Transverse colon (tissue), 4 donors: ENCODE measurements at regions of chr12 and their contacts with region 1.

Region 1: DNA sequence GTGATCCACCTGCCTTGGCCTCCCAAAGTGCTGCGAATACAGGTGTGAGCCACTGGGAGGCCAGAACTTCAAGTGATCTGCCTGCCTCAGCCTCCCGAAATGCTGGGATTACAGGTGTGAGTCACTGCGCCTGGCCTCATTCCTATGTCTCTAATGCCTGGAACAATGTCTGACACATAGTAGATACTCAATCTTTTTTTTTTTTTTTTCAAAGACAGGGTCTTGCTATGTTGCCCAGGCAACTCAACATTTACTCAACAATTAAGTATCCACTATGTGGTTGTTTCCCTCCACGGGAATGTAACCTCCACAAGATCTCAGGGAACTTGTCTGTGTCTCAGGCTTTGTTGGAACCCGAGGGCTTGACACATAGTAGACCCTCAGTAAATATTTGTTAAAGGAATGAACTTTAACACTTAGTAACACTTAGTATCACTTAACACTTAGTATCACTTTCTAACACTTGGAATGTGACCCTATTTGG is 3.0 kb upstream of the TMEM120B start:
- DNase-seq: no peak
- H3K4me3 ChIP-seq: no peak overlapping the region
- H3K27ac ChIP-seq: no peak overlapping the region
- H3K4me1 ChIP-seq: peaks cover 9 to 20% (median 18%) of the 10 kb centered on the region in 4 donors
- H3K27me3 ChIP-seq: no peaks in the 10 kb centered on the region
- CTCF ChIP-seq: no peak
- EP300 ChIP-seq: no peak
- POLR2A ChIP-seq: no peak

Region 2: DNA sequence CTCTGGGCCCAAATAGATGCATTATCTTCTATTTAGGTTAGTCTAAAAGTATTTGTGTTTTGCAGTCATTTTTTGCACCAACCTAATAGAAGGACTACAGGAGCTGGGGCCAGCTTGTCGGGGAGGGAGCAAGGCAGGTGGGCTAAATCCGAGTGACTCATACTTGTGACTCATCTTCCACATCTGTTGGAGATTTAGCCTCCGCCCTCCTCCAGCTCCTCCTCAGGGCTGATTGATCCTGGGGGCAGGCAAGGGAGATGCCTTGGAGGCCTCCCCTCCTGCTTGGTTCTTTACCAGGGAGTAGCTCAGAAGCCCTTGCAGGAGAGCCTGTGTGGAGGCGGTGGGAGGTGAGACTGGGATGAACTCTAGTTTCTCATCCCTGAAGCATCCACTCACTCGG is 56.1 kb after region 1 on chr12:
- in situ Hi-C with region 1: loop called in 2 of 4 experiments (anchors 10 kb)
- intact Hi-C with region 1: no loop called
- DNase-seq: no peak
- H3K4me3 ChIP-seq: no peak overlapping the region
- H3K27ac ChIP-seq: no peak overlapping the region
- H3K4me1 ChIP-seq: peaks cover 0 to 19% (median 8%) of the 10 kb centered on the region in 4 donors
- H3K27me3 ChIP-seq: no peaks in the 10 kb centered on the region
- CTCF ChIP-seq: no peak
- EP300 ChIP-seq: no peak
- POLR2A ChIP-seq: no peak

Region 3: DNA sequence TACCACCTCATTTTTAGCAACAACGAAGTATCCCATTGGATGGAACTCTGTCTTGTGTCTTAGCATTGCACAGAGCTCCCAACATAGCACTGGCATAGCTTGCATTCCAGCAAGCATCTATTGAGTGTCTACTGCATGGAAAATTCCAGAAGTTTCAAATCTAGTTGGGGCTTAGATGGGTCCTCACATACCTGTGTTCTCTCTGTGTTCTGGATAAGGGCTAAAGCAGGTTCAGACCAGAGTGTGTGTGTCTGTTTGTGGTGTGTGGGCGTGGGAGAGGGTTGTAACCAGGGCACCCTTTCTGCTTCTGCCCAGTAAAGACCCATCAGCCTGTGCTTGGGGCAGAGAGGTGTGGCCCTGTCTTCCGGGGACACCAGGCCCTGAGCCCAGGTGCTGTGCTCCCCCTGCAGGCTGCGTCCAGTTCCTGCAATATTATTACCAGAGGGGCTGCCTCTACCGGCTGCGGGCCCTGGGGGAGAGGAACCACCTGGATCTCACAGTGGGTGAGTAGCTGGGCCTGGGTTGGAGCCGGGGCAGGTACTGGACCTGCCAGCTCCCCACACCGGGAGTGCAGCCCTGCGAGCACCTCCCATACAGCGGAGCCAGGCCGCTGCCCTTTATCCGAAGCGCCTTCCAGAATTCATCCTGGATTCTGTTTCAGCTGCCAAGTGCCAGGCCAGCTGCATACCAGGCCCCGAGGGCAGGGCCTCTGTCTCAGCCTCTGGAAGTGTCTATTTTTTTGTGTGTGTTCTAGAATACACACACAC is 63.7 kb after region 1 on chr12:
- in situ Hi-C with region 1: loop called in 2 of 4 experiments (anchors 10 kb)
- intact Hi-C with region 1: no loop called
- DNase-seq: peak; percentile 84
- H3K4me3 ChIP-seq: no peak overlapping the region
- H3K27ac ChIP-seq: peak overlapping the region in 2 of 4 donors; percentile 3 to 7
- H3K4me1 ChIP-seq: peaks cover 3 to 19% (median 8%) of the 10 kb centered on the region in 4 donors
- H3K27me3 ChIP-seq: no peaks in the 10 kb centered on the region
- CTCF ChIP-seq: peak; percentile 83 to 92 (median 86)
- EP300 ChIP-seq: no peak
- POLR2A ChIP-seq: no peak